Sigmoid colon (tissue), 7 donors: ENCODE measurements at regions of chr2 and their contacts with region 1.

Region 1: DNA sequence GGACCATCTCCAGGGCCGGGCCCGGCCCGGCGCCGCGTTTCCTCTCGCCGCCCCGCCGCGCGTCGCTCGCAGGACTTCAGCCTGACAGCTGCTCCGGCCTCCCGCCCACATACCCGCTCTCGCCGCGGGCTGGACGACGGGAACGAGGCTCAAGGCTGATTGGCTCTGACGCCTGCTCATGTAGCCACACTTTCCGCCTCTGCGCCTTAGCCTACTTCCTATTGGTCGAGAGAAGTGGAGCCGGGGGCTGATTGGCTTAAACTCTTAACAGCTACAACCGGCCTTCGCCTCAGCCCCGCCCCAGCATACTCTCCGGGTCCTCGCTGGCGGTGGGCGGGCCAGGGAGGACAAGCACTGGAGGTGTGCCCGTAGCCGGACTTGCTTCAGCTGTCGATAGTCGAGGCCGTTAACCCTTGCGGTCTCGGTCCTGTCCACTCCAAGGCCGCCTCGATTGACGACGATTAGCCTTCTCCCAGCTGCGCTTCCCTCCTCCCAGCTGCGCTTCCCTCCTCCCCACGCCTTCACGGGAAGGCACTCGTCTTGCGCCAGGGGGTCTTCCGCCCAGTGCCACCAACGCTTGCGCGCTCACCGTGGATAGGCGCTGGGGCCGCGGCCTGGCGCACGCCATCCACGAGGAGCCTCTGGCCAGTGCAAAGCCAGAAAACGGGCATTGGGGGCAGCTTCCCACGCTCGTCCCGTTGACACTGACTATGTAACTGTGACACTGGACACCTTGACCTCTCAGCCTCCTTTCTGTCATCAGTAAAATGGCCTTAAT is at the start of gene PRADC1:
- DNase-seq: peak; percentile 100
- H3K4me3 ChIP-seq: peak within 1 kb of the TSS; percentile 66 to 96 (median 90)
- H3K27ac ChIP-seq: peak within 1 kb of the TSS; percentile 80 to 96 (median 92)
- H3K4me1 ChIP-seq: peaks cover 0 to 47% (median 41%) of the 10 kb centered on the region in 4 donors
- H3K27me3 ChIP-seq: no peaks in the 10 kb centered on the region
- CTCF ChIP-seq: no peak
- EP300 ChIP-seq: no peak
- POLR2A ChIP-seq: peak in 1 of 2 donors; percentile 44
- total RNA-seq, gene PRADC1: 27.7 to 68.1 (median 38.6) TPM

Region 2: DNA sequence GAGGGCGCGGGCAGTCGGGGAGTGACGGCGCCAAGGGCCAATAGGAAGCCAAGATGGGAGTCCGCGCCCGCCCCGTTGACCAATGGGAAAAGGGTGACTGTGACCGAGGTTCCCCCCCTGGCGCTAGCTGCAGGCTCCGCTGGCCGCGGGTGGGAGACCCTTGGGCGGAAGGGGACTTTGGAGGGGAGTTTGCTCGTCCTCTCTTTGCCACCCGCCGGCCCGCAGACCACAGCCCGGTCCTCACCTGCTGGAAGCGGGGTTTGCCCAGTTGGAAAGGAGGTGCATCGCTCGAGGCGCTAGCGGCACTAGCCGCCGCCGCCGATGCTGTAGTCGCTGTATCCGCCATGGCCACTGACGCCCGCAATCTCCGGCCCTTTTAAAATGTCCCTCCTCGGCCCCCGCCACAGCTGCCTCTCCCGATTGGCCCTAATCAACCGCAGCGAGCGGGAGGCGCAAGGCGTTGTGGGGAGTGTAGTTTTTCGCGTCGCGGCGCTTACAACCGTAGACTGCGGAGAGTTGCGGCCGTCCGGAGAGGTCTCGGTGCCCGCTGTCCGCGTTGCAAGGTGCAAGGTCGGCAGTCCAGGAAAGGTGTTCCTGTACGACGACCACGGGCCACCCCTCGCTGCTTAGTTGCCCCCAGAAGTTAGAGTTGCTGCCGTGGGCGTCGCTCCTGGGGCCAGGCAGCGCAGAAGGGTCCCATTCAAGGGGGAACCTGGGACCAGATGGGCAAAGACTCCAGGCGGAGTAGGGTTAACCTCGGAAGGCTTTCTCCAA is 161.8 kb before region 1 on chr2 and contains the start of gene SFXN5:
- intact Hi-C with region 1: loop called (anchors 5 kb)
- DNase-seq: peak; percentile 99
- H3K4me3 ChIP-seq: peak within 1 kb of the TSS; percentile 67 to 90 (median 78)
- H3K27ac ChIP-seq: peak within 1 kb of the TSS; percentile 87 to 96 (median 93)
- H3K4me1 ChIP-seq: peaks cover 0 to 37% (median 29%) of the 10 kb centered on the region in 4 donors
- H3K27me3 ChIP-seq: no peaks in the 10 kb centered on the region
- CTCF ChIP-seq: peak in 1 of 4 experiments; percentile 26
- EP300 ChIP-seq: no peak
- POLR2A ChIP-seq: peak in 1 of 2 donors; percentile 4
- total RNA-seq, gene SFXN5: 6.7 to 27.1 (median 10.4) TPM

Region 3: GRCh38 chr2:73112913-73113633 is 120.3 kb before region 1 on chr2 and contains the start of gene RAB11FIP5:
- intact Hi-C with region 1: loop called (anchors 5 kb)
- DNase-seq: peak; percentile 90
- H3K4me3 ChIP-seq: peak within 1 kb of the TSS; percentile 60 to 92 (median 84)
- H3K27ac ChIP-seq: peak within 1 kb of the TSS; percentile 88 to 97 (median 92)
- H3K4me1 ChIP-seq: peaks cover 0 to 44% (median 33%) of the 10 kb centered on the region in 4 donors
- H3K27me3 ChIP-seq: no peaks in the 10 kb centered on the region
- CTCF ChIP-seq: peak in 1 of 4 experiments; percentile 16
- EP300 ChIP-seq: no peak
- POLR2A ChIP-seq: no peak
- total RNA-seq, gene RAB11FIP5: 13.9 to 24.4 (median 19.4) TPM

Region 4: GRCh38 chr2:73214120-73215035 is 19.0 kb before region 1 on chr2 and contains the start of gene SMYD5:
- intact Hi-C with region 1: loop called (anchors 2 kb)
- DNase-seq: peak; percentile 91
- H3K4me3 ChIP-seq: peak within 1 kb of the TSS; percentile 87 to 95 (median 91)
- H3K27ac ChIP-seq: peak within 1 kb of the TSS; percentile 66 to 76 (median 72)
- H3K4me1 ChIP-seq: peaks cover 0 to 32% (median 9%) of the 10 kb centered on the region in 4 donors
- H3K27me3 ChIP-seq: no peaks in the 10 kb centered on the region
- CTCF ChIP-seq: no peak
- EP300 ChIP-seq: no peak
- POLR2A ChIP-seq: peak in 1 of 2 donors; percentile 17
- total RNA-seq, gene SMYD5: 6.9 to 12.4 (median 7.9) TPM

Region 5: GRCh38 chr2:73385595-73386341 is 152.4 kb after region 1 on chr2 and contains the start of gene ALMS1:
- intact Hi-C with region 1: loop called (anchors 2 kb)
- DNase-seq: peak; percentile 93
- H3K4me3 ChIP-seq: peak within 1 kb of the TSS; percentile 69 to 81 (median 73)
- H3K27ac ChIP-seq: peak within 1 kb of the TSS; percentile 90 to 95 (median 92)
- H3K4me1 ChIP-seq: peaks cover 0 to 26% (median 16%) of the 10 kb centered on the region in 4 donors
- H3K27me3 ChIP-seq: no peaks in the 10 kb centered on the region
- CTCF ChIP-seq: peak in 1 of 4 experiments; percentile 37
- EP300 ChIP-seq: no peak
- POLR2A ChIP-seq: peak in 1 of 2 donors; percentile 19
- total RNA-seq, gene ALMS1: 29.3 to 47.6 (median 34.1) TPM

Region 6: GRCh38 chr2:73736855-73737779 is 503.8 kb after region 1 on chr2 and contains the start of gene TPRKB:
- intact Hi-C with region 1: loop called (anchors 10 kb)
- DNase-seq: peak; percentile 98
- H3K4me3 ChIP-seq: peak within 1 kb of the TSS; percentile 66 to 83 (median 71)
- H3K27ac ChIP-seq: peak within 1 kb of the TSS; percentile 74 to 80 (median 80)
- H3K4me1 ChIP-seq: peaks cover 0 to 19% (median 14%) of the 10 kb centered on the region in 4 donors
- H3K27me3 ChIP-seq: no peaks in the 10 kb centered on the region
- CTCF ChIP-seq: no peak
- EP300 ChIP-seq: peak in 1 of 4 donors; percentile 33
- POLR2A ChIP-seq: peak; percentile 35 to 39
- total RNA-seq, gene TPRKB: 19.0 to 45.9 (median 40.2) TPM